ENCODE measurements at regions of chr21 and their contacts with region 1.

Region 1: DNA sequence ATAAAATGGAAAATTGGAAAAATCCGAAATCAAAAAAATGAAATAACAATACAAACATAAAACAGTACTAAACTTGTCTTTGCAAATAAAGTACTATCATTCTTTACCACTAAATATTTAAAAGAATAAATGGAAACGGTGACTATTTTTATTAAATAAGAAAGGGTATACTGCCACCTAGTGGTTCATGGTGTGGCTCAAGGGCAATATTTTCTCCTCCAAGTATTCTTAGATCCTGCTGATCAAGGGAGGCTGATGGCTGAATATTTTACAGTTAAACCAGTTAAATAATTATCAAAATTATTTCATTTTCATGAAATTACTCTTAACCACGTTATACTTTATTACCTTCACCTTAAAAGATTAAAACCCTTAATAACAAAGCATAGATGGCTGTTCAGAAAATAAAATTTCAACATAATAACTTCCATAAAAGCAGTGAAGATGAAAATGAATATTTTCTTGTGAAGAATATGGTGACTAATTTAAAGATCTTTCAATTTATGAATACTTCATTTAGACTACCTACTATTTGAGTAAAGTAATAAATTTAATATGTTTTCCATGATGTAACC is 1793.9 kb downstream of the NCAM2 start:
- DNase-seq: peak; percentile 77
- H3K4me3 ChIP-seq: no peak overlapping the region
- H3K27ac ChIP-seq: no peak overlapping the region
- H3K4me1 ChIP-seq: no peaks in the 10 kb centered on the region
- H3K27me3 ChIP-seq: no peaks in the 10 kb centered on the region
- CTCF ChIP-seq: peak; percentile 45 to 46
- POLR2A ChIP-seq: no peak

Region 2: GRCh38 chr21:20999659-21000058 is 1792.4 kb before region 1 on chr21:
- CTCF ChIA-PET with region 1: interaction called, 5 read pairs
- POLR2A ChIA-PET with region 1: no interaction called
- dilution Hi-C with region 1: no loop called
- intact Hi-C with region 1: loop called (anchors 1 kb)
- DNase-seq: peak; percentile 46
- H3K4me3 ChIP-seq: no peak overlapping the region
- H3K27ac ChIP-seq: no peak overlapping the region
- H3K4me1 ChIP-seq: peaks cover 9% of the 10 kb centered on the region
- H3K27me3 ChIP-seq: peaks cover 6 to 10% of the 10 kb centered on the region in 2 experiments
- CTCF ChIP-seq: peak; percentile 46 to 58
- POLR2A ChIP-seq: no peak

Region 3: DNA sequence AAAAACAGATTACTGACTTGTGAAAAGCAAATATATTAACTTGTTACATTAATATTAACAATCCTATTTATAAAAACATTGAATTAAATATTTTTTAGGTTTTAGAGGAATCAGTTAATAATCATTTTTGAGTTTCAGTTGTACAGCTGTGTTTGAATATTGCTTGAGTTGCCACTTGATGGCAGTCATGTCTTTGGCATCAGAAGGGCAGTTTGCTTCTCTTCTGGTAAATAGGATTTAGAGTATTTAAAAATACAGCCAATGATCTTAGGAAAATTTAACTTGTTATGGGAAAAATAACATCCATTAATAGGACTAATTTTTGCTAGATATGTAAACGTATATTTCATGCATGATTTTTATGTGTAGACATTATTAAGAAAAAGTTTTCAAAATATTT is 1559.8 kb before region 1 on chr21:
- CTCF ChIA-PET with region 1: interaction called, 7 read pairs
- POLR2A ChIA-PET with region 1: no interaction called
- dilution Hi-C with region 1: no loop called
- intact Hi-C with region 1: loop called (anchors 2 kb)
- DNase-seq: peak; percentile 22
- H3K4me3 ChIP-seq: no peak overlapping the region
- H3K27ac ChIP-seq: no peak overlapping the region
- H3K4me1 ChIP-seq: no peaks in the 10 kb centered on the region
- H3K27me3 ChIP-seq: no peaks in the 10 kb centered on the region
- CTCF ChIP-seq: no peak
- POLR2A ChIP-seq: no peak

Region 4: DNA sequence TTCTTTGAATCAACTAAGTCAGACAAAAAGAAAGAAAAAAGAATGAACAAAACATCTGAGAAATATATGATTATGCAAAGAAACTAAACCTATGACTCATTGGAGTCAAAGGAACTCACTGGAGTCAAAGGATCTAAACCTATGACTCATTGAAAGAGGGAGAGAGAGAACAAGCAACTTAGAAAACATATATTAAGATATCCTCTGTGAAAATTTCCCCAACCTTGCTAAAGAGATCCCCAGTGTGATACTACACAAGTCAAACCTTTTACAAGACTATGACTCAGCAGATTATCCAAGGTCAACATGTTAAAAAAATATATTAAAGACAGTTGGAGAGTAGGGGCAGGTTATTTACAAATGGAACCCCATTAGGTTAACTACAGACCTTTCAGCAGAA is 255.6 kb before region 1 on chr21:
- CTCF ChIA-PET with region 1: no interaction called
- POLR2A ChIA-PET with region 1: no interaction called
- dilution Hi-C with region 1: no loop called
- intact Hi-C with region 1: no loop called
- DNase-seq: no peak
- H3K4me3 ChIP-seq: no peak overlapping the region
- H3K27ac ChIP-seq: no peak overlapping the region
- H3K4me1 ChIP-seq: no peaks in the 10 kb centered on the region
- H3K27me3 ChIP-seq: no peaks in the 10 kb centered on the region
- CTCF ChIP-seq: no peak
- POLR2A ChIP-seq: no peak

Region 5: GRCh38 chr21:22728091-22728490 is 64.0 kb before region 1 on chr21:
- CTCF ChIA-PET with region 1: no interaction called
- POLR2A ChIA-PET with region 1: no interaction called
- dilution Hi-C with region 1: no loop called
- intact Hi-C with region 1: no loop called
- DNase-seq: no peak
- H3K4me3 ChIP-seq: no peak overlapping the region
- H3K27ac ChIP-seq: no peak overlapping the region
- H3K4me1 ChIP-seq: no peaks in the 10 kb centered on the region
- H3K27me3 ChIP-seq: no peaks in the 10 kb centered on the region
- CTCF ChIP-seq: no peak
- POLR2A ChIP-seq: no peak

Region 6: DNA sequence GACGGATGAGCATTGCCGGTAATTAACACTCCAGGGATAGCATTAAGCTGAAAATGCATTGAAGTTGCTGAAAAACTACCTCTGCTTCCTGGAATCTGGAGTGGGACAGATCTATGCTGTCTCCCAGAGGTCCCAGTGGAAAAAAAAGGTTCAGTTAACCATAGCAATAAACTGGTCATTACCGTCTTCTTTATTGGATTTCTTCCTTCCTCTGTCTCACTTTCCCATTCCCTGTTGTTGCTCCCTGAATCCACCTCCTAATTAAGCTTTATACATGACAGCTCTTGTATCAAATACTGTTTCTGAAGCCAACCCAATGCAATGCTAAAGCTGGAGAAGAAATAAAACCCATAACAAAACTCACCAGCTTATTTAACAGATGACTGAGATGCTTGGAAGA is 12.1 kb after region 1 on chr21:
- CTCF ChIA-PET with region 1: interaction called, 10 read pairs
- POLR2A ChIA-PET with region 1: no interaction called
- dilution Hi-C with region 1: no loop called
- intact Hi-C with region 1: no loop called
- DNase-seq: no peak
- H3K4me3 ChIP-seq: no peak overlapping the region
- H3K27ac ChIP-seq: no peak overlapping the region
- H3K4me1 ChIP-seq: no peaks in the 10 kb centered on the region
- H3K27me3 ChIP-seq: no peaks in the 10 kb centered on the region
- CTCF ChIP-seq: no peak
- POLR2A ChIP-seq: no peak

Region 7: GRCh38 chr21:23016405-23017016 is 224.4 kb after region 1 on chr21:
- CTCF ChIA-PET with region 1: interaction called, 13 read pairs
- POLR2A ChIA-PET with region 1: no interaction called
- dilution Hi-C with region 1: no loop called
- intact Hi-C with region 1: loop called (anchors 2 kb)
- DNase-seq: peak; percentile 83
- H3K4me3 ChIP-seq: no peak overlapping the region
- H3K27ac ChIP-seq: peak overlapping the region; percentile 98
- H3K4me1 ChIP-seq: peaks cover 36% of the 10 kb centered on the region
- H3K27me3 ChIP-seq: no peaks in the 10 kb centered on the region
- CTCF ChIP-seq: peak; percentile 59 to 65
- POLR2A ChIP-seq: no peak

Region 8: DNA sequence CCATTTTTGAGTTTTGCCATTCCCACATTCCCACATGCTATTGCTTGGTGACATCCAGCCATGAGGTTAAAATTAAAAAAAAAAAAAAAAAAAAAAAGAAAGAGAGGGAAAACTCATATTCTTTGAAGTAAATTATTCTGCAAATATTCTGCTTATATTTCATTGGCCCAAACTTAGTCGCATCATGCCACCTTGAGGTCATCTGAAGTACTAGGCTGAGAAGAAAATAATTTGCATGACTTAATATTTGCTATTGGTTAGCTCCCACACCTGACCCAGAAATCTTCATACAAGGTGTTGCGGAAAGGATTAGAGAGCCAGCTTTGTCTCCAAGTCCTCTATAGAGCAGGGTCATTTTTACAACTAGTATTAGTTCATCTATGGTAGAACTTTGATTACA is 609.2 kb after region 1 on chr21:
- CTCF ChIA-PET with region 1: no interaction called
- POLR2A ChIA-PET with region 1: no interaction called
- dilution Hi-C with region 1: no loop called
- intact Hi-C with region 1: loop called (anchors 2 kb)
- DNase-seq: peak; percentile 51
- H3K4me3 ChIP-seq: no peak overlapping the region
- H3K27ac ChIP-seq: no peak overlapping the region
- H3K4me1 ChIP-seq: no peaks in the 10 kb centered on the region
- H3K27me3 ChIP-seq: no peaks in the 10 kb centered on the region
- CTCF ChIP-seq: peak; percentile 28 to 32
- POLR2A ChIP-seq: no peak

Measured in endothelial cell of umbilical vein (primary cell).